PC-9 (cell line): ENCODE measurements at regions of chr3 and their contacts with region 1.

Region 1: DNA sequence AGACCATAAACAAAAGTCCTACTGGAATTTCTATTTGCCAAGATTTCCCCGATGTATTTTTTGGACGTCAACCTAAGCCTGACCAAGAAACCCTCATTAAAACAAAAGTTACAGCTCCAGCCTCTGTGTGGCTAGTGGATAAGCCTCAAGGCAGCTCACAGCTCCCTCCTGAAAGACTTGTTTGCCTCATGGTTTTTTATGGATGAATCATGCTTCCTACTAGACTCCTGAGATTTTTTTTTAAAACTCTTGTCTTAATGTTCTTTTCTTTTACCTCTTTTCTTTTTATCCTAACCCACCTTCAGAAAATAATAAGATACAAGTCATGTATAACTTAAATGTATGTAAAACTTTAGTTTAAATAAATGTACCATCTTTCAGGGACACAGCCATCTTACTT is 52.4 kb downstream of the SUCNR1 start:
- DNase-seq: peak; percentile 44 to 73
- H3K4me3 ChIP-seq: no peak overlapping the region
- H3K27ac ChIP-seq: no peak overlapping the region
- H3K4me1 ChIP-seq: peaks cover 7% of the 10 kb centered on the region
- H3K27me3 ChIP-seq: no peaks in the 10 kb centered on the region
- CTCF ChIP-seq: no peak

Region 2: GRCh38 chr3:151976211-151977050 is 50.6 kb after region 1 on chr3:
- CTCF ChIA-PET with region 1: no interaction called
- POLR2A ChIA-PET with region 1: no interaction called
- intact Hi-C with region 1: loop called (anchors 2 kb)
- DNase-seq: peak; percentile 49 to 93
- H3K4me3 ChIP-seq: peak overlapping the region; percentile 8; the same call in 1 of the 2 replicates
- H3K27ac ChIP-seq: peak overlapping the region; percentile 42
- H3K4me1 ChIP-seq: peaks cover 16% of the 10 kb centered on the region
- H3K27me3 ChIP-seq: no peaks in the 10 kb centered on the region
- CTCF ChIP-seq: no peak

Region 3: DNA sequence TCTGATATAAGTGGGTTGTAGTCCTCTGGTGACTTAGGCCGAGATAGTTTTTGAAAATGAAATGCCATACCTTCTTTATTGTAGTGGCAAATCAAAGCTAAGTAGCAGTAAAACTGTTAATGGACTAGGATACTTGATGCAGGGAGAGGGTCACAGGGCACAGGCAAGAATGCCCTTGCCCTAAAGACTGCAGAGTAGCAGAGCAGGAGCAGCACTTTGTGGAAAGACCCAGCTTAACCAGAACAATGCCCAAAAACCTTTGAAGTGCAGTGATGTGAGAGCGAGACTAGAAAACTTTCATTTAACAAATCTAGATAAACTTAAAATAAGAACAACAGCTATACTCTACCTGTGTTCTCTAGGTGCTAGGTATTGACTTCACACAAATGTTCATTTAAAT is 464.8 kb after region 1 on chr3:
- CTCF ChIA-PET with region 1: no interaction called
- POLR2A ChIA-PET with region 1: interaction called, 19 read pairs
- intact Hi-C with region 1: no loop called
- DNase-seq: no peak
- H3K4me3 ChIP-seq: no peak overlapping the region
- H3K27ac ChIP-seq: no peak overlapping the region
- H3K4me1 ChIP-seq: peaks cover 14% of the 10 kb centered on the region
- H3K27me3 ChIP-seq: no peaks in the 10 kb centered on the region
- CTCF ChIP-seq: no peak

Region 4: GRCh38 chr3:152915695-152916094 is 989.8 kb after region 1 on chr3:
- CTCF ChIA-PET with region 1: no interaction called
- POLR2A ChIA-PET with region 1: no interaction called
- intact Hi-C with region 1: no loop called
- DNase-seq: no peak
- H3K4me3 ChIP-seq: no peak overlapping the region
- H3K27ac ChIP-seq: no peak overlapping the region
- H3K4me1 ChIP-seq: no peaks in the 10 kb centered on the region
- H3K27me3 ChIP-seq: no peaks in the 10 kb centered on the region
- CTCF ChIP-seq: no peak